Heart left ventricle (tissue), 16 donors: ENCODE measurements at regions of chr6 and their contacts with region 1.

Region 1: DNA sequence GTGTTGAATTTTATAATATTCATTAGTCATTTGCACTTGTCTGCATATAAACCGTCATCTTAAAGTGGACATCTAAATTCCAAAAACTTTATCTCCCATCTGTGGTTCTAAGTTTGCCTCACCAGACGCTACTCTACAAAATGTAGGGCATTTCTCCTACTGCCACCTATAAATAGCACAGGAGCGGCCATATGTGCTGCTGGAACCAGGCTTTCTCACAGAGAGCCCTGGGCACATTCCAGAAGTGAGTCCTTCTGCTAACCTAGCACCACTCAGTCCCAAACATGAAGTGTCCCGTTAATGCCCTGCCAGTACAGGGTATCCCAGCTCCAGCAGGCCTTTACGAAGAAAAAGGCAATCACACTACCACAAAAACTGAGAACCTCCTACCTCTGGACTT is 153.7 kb downstream of the TMEM242 start:
- DNase-seq: peak in 4 of 5 donors; percentile 51 to 71 (median 65)
- ATAC-seq: peak; percentile 92 to 96 (median 94)
- H3K4me3 ChIP-seq: no peak overlapping the region
- H3K27ac ChIP-seq: peak overlapping the region in 5 of 12 donors; percentile 0 to 28 (median 14)
- H3K4me1 ChIP-seq: peaks cover 0 to 25% (median 8%) of the 10 kb centered on the region in 12 donors
- H3K27me3 ChIP-seq: no peaks in the 10 kb centered on the region
- CTCF ChIP-seq: no peak
- POLR2A ChIP-seq: no peak

Region 2: DNA sequence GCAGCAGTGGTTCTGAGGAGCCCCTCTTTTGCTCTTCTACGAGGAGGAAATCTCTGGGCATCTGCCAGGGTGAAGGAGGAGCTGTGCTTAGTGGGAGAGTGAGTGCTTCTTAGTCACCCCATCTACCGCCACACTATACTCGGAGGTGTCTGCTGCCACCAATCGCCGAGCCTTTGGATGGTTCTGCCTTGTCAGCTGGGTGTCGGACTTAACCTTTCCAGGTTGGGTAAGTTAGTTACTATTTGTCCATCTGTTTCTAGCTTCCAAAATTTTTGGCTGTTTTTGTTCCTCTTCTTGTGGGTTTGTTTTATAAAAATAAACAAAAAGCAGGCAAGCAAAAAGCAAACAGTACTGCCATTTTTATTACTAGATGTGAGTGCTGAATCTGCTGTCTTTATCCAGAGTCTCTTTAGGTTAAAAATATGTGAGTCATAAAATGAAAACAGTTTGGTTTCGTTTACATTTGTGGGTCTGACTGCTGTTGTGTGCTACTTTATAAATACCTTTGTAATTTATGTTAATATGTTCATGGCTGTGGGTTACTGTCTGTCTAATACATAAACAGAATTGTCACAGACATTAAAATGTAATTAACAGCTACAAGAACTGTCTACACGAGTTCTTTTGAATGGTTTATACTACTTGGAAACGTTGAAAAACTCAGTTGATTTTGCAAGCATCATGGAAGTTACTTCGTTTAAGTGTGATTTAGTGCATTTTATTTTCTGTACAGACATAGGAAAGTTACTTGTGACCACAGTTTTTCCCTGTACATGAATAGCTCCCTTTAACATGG is 303.2 kb before region 1 on chr6:
- intact Hi-C with region 1: loop called in 1 of 10 experiments (anchors 10 kb)
- DNase-seq: peak in 3 of 5 donors; percentile 32 to 58 (median 33)
- ATAC-seq: peak; percentile 69 to 88 (median 81)
- H3K4me3 ChIP-seq: no peak overlapping the region
- H3K27ac ChIP-seq: no peak overlapping the region
- H3K4me1 ChIP-seq: peaks cover 4 to 72% (median 51%) of the 10 kb centered on the region in 12 donors
- H3K27me3 ChIP-seq: no peaks in the 10 kb centered on the region
- CTCF ChIP-seq: peak in 4 of 12 donors; percentile 6 to 34 (median 26)
- POLR2A ChIP-seq: no peak

Region 3: GRCh38 chr6:157034436-157035230 is 135.0 kb before region 1 on chr6:
- intact Hi-C with region 1: loop called in 1 of 10 experiments (anchors 5 kb)
- DNase-seq: no peak
- ATAC-seq: peak in 3 of 4 donors; percentile 47 to 68 (median 66)
- H3K4me3 ChIP-seq: no peak overlapping the region
- H3K27ac ChIP-seq: no peak overlapping the region
- H3K4me1 ChIP-seq: peaks cover 0 to 54% (median 39%) of the 10 kb centered on the region in 12 donors
- H3K27me3 ChIP-seq: no peaks in the 10 kb centered on the region
- CTCF ChIP-seq: peak; percentile 45 to 75 (median 58)
- POLR2A ChIP-seq: no peak